H1 (cell line): ENCODE measurements at regions of chr2 and their contacts with region 1.

Region 1: DNA sequence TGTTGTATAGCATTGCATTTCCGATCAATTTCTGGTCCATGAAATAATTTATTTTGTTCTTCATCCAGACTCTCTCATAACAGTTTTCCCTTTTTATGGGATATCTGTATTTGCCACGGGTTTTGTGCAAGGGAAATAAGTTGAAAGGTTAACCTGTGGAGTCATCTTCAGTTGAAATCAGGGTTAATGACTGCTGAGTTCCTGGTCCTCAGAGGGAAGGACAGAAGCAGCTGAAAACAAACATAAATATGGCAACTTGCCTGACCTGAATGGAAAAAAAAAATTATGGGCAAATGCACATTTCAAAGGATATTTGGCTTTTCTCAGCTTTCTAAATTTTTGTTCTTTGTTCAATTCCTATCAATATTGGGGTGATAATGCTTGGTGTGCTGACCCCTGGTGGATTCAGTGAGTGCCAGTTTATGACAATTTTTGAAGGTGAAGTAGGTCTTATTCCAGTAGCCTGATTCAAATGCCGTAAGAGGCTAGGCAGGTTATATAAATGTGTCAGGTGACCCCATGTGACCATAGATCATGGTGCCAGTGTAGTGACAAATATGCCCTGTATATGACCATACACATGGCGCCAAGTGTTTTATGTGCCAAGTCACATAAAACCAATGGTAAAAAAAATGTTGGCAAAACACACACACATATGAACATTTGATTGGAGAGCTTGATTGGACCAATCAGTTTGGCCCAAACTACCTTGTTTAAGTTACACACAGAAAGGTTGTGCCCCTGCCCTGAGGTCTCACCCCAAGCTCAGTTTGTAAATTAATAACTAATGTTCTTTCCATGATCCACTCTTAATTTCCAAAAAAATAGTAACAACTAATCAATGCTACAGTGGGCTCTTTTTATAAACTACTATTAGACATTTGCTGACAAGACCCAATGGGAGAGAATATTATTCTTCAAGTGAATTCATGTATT is 47.6 kb upstream of the FAM124B start:
- DNase-seq: no peak
- H3K4me3 ChIP-seq: no peak overlapping the region
- H3K27ac ChIP-seq: no peak overlapping the region
- H3K4me1 ChIP-seq: no peaks in the 10 kb centered on the region
- H3K27me3 ChIP-seq: no peaks in the 10 kb centered on the region
- CTCF ChIP-seq: peak in 2 of 3 experiments; percentile 46 to 66; a peak in 3 of 4 replicates
- EP300 ChIP-seq: no peak
- POLR2A ChIP-seq: no peak
- RAD21 ChIP-seq: peak; percentile 53 to 65

Region 2: DNA sequence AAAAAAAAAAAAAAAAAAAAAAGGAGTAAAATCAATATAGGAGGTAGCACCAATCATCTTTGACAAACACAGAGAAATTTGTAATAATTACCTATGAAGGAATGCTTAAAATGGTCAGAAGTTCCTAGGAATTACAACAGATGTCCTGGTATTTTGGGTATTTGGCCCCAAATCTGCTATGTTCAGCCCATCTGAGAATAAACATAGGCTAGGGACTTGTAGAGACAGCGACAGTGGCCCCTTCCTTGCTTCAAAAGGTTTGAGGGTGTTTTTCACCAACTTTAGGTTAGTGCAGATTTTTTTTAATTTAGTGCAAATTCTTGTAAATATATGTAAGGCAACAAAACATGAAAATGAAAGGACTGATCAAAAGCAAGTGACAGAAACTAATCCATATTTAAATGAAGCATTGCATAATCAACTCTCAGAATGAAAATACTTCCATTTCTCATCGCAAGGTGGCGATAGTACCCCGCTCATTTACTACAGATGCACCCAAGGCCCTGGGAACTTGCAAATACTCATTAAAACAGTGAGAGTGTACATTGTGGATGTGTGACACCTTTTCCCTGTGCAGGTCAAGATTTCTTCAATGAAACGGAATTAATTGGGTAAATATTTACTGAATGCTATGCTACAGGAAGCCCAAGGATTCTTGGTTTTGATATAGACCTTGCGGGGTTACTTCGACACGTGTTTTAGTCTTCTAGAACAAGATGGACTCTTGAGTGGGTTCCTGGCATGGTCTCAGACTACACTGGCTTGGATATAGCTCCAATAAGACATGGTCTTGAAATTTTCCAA is 92.2 kb before region 1 on chr2:
- CTCF ChIA-PET with region 1: interaction called, 22 read pairs
- POLR2A ChIA-PET with region 1: no interaction called
- DNase-seq: peak in 1 of 2 experiments; percentile 76
- H3K4me3 ChIP-seq: no peak overlapping the region
- H3K27ac ChIP-seq: no peak overlapping the region
- H3K4me1 ChIP-seq: no peaks in the 10 kb centered on the region
- H3K27me3 ChIP-seq: no peaks in the 10 kb centered on the region
- CTCF ChIP-seq: peak in 2 of 3 experiments; percentile 74 to 78; a peak in 3 of 4 replicates
- EP300 ChIP-seq: no peak
- POLR2A ChIP-seq: no peak
- RAD21 ChIP-seq: peak; percentile 89 to 91

Region 3: DNA sequence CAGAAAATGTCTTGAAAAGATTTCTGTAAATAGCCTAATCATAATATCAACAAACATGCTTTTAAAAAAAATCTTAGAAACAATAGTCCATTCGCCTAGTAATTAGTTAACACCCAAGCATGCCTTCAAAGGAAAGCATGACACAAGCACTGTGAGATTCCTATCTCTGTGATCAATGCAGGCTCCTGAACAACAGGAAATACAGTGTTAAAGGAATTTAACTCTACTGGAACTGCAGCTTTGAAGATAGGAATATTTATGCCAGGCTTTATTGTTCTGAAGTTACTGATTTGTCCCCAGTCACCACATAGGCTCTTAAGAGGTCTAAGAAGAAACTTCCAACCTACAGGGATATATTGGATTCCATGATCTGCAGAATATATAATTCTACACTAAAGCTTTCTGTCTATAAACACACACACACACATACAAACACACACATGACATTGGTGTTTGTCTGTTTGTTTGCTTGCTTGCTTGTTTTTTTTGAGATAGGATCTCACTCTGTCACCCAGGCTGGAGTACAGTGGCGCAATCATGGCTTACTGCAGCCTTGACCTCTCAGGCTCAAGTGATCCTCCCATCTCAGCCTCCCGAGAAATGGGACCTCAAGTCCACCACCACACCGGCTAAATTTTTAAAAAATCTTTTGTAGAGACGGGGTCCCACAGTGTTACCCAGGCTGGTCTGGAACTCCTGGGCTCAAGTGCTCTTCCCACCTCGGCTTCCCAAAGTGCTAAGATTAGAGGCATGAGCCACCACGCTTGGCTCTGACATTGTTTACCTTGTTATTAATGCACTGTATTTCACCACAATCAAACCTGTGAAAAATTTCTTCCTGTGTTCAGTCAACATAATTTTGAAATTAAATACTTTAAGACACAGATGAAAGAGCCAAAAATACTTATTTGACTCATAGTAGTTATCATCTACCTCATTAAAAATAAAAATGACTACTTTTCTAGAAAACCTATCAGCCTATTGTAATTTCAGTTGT is 31.8 kb before region 1 on chr2:
- CTCF ChIA-PET with region 1: interaction called, 10 read pairs
- POLR2A ChIA-PET with region 1: interaction called, 3 read pairs
- DNase-seq: no peak
- H3K4me3 ChIP-seq: no peak overlapping the region
- H3K27ac ChIP-seq: no peak overlapping the region
- H3K4me1 ChIP-seq: peaks cover 0 to 4% (median 0%) of the 10 kb centered on the region in 4 experiments; a peak in 1 of 7 replicates
- H3K27me3 ChIP-seq: no peaks in the 10 kb centered on the region
- CTCF ChIP-seq: no peak
- EP300 ChIP-seq: no peak
- POLR2A ChIP-seq: no peak
- RAD21 ChIP-seq: no peak